ENCODE measurements at regions of chrX and their contacts with region 1.

Region 1: GRCh38 chrX:69222103-69223090 is 57.1 kb upstream of the PJA1 start:
- DNase-seq: peak; percentile 75
- ATAC-seq: peak; percentile 86 to 90

Region 2: DNA sequence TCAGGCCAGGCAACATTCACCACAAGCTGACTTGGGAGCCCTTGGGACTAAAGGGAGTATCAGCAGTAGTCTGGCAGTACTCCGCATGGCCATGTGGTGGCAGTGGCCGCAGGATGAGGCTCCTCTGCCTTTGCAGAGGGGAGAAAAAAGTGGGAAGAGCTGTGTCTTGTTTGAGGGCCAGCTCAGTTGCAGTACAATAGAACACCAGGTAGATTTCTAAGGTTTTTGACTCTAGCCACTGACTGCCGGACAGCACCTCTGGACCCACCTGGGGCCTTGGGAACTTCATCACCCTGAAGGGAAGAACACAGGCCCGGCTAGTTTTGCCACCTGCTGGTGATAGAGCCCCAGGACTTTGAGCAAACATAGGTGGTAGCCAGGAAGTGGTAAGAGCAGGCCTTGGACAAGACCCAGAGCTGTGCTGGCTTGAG is 1203.7 kb before region 1 on chrX:
- intact Hi-C with region 1: no loop called
- DNase-seq: no peak
- ATAC-seq: no peak

Region 3: GRCh38 chrX:68822641-68823410 is 399.6 kb before region 1 on chrX:
- intact Hi-C with region 1: loop called (anchors 2 to 10 kb)
- DNase-seq: peak; percentile 56
- ATAC-seq: peak; percentile 89 to 91

Region 4: GRCh38 chrX:68828740-68829552 is 393.5 kb before region 1 on chrX and contains the start of gene EFNB1:
- intact Hi-C with region 1: loop called in 1 of 2 experiments (anchors 10 kb)
- DNase-seq: peak; percentile 93
- ATAC-seq: peak; percentile 91 to 94
- total RNA-seq, gene EFNB1: 23.6 to 25.4 TPM

Region 5: GRCh38 chrX:69093960-69094871 is 128.2 kb before region 1 on chrX:
- intact Hi-C with region 1: loop called (anchors 10 kb)
- DNase-seq: peak; percentile 28
- ATAC-seq: peak; percentile 13 to 60

Region 6: GRCh38 chrX:69158166-69158980 is 64.0 kb before region 1 on chrX:
- intact Hi-C with region 1: loop called in 1 of 2 experiments (anchors 10 kb)
- DNase-seq: peak; percentile 73
- ATAC-seq: peak; percentile 38 to 84

Region 7: GRCh38 chrX:69280933-69281332 is 58.5 kb after region 1 on chrX:
- intact Hi-C with region 1: loop called in 1 of 2 experiments (anchors 5 kb)
- DNase-seq: no peak
- ATAC-seq: peak; percentile 33 to 38

Region 8: DNA sequence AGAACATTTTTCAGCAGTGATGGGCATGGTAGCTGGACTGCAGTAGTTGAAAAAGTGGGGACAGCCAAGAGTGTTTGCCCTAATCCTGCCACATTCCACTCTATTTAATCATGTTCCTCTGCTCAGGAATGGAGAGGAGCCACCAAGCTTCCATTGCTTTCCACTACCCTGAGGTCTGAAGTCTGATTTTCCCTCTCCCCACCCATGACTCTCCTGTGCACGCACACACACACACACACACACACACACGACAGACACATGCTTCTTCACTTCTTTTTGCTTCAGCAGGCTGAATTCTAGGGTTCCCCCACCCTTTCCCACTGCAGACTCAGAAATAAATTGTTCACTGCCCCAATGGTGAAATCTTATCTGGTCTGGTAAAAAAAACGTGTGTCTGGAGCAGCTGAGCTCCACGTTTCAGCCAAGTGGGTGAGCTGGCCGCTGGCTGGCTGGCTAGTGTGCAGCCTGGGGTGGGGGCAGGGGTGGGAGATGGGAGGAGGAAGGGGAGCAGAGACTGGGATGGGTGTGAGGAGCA is 139.0 kb after region 1 on chrX:
- intact Hi-C with region 1: no loop called
- DNase-seq: no peak
- ATAC-seq: peak; percentile 63 to 82